Panc1 (cell line): ENCODE measurements at regions of chr9 and their contacts with region 1.

Region 1: GRCh38 chr9:8514760-8515159 is 715.2 kb upstream of the DMAC1 start:
- DNase-seq: no peak
- ATAC-seq: no peak
- H3K4me3 ChIP-seq: no peak overlapping the region
- H3K27ac ChIP-seq: no peak overlapping the region
- H3K4me1 ChIP-seq: no peaks in the 10 kb centered on the region
- H3K27me3 ChIP-seq: no peaks in the 10 kb centered on the region
- CTCF ChIP-seq: no peak

Region 2: DNA sequence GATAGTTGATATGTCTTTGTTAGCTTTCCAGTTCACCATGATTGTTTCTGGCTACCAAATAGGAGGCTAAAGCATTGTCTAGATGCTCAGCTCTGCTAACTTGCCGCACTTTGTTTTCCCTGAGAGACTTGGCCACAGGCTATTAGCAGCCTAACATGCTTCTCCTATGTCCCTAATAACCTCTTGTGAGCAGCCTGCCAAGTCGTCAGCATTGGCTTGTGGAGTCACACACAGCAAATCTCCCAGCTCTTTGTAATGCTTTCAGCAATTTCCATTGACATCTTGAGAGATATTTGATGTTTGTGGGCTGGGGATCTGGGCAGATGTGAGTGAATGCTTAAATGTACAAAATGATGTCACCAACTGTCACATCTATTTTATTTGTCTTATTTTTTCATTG is 1410.1 kb before region 1 on chr9:
- CTCF ChIA-PET with region 1: no interaction called
- POLR2A ChIA-PET with region 1: interaction called, 11 read pairs
- in situ Hi-C with region 1: no loop called
- intact Hi-C with region 1: no loop called
- DNase-seq: no peak
- ATAC-seq: no peak
- H3K4me3 ChIP-seq: no peak overlapping the region
- H3K27ac ChIP-seq: no peak overlapping the region
- H3K4me1 ChIP-seq: no peaks in the 10 kb centered on the region
- H3K27me3 ChIP-seq: no peaks in the 10 kb centered on the region
- CTCF ChIP-seq: no peak

Region 3: DNA sequence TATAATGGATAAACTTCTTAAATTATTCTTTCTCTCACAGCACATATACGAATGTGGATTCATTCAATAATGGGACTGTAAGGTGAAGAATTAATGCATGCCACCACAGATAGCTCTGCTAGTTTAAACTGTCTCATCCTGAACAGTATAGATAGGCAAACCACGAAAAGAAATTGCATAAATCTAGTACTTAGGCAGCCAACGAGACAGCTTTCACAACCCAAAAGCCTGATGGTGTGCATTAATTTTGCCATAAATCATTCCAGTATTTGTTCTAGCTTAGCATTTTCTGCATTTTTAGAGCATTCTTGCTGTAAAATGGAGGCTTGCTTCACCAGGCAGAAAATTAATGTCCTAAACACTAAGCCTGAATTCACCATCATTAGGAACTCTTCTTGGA is 119.0 kb after region 1 on chr9:
- CTCF ChIA-PET with region 1: no interaction called
- POLR2A ChIA-PET with region 1: no interaction called
- in situ Hi-C with region 1: no loop called
- intact Hi-C with region 1: no loop called
- DNase-seq: no peak
- ATAC-seq: no peak
- H3K4me3 ChIP-seq: no peak overlapping the region
- H3K27ac ChIP-seq: no peak overlapping the region
- H3K4me1 ChIP-seq: no peaks in the 10 kb centered on the region
- H3K27me3 ChIP-seq: no peaks in the 10 kb centered on the region
- CTCF ChIP-seq: no peak